Endothelial cell of umbilical vein (primary cell): ENCODE measurements at regions of chr4 and their contacts with region 1.

Region 1: GRCh38 chr4:2536193-2537010 is at the start of gene FAM193A:
- DNase-seq: peak; percentile 100
- H3K4me3 ChIP-seq: peak within 1 kb of the TSS; percentile 75 to 99 (median 88)
- H3K27ac ChIP-seq: peak within 1 kb of the TSS; percentile 81
- H3K4me1 ChIP-seq: peaks cover 9% of the 10 kb centered on the region
- H3K27me3 ChIP-seq: no peaks in the 10 kb centered on the region
- CTCF ChIP-seq: no peak
- POLR2A ChIP-seq: peak; percentile 46
- total RNA-seq, gene FAM193A: 32.0 and 32.1 TPM in 2 replicates

Region 2: DNA sequence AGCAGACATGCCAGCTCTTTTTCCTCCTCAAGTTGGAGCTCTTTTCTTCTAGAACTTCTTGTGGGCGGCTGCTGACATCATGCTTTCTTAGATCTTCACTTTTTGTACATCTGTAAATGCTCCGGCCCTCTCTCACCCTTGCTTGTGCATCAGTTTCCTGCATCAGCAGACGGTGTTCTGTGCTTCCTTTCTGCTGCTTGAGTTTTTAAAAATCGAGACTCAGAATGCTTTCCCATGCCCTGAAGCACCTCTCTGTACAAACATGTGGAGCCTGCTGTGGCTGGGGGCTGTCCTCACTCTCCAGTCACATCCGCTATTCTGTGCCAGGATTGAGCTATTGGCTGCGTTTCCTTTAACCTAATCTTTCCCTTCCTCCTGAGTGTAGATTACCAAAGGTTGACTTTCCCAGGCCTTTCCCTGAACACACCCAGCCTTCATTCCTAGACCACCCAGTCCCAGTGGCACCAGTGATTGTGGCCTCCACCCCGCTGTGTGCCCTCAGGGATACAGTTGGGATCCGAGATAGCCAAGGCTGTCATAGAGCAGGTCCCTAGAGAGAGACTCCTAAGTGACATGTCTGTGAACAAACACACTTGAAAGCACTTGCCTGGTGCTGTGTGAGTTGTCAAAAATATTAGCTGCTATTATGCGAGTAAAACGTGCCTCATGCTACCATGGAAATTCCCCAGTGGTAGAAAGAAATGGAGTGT is 177.8 kb after region 1 on chr4:
- CTCF ChIA-PET with region 1: no interaction called
- POLR2A ChIA-PET with region 1: no interaction called
- dilution Hi-C with region 1: no loop called
- intact Hi-C with region 1: loop called (anchors 10 kb)
- DNase-seq: peak; percentile 99
- H3K4me3 ChIP-seq: no peak overlapping the region
- H3K27ac ChIP-seq: peak overlapping the region; percentile 94
- H3K4me1 ChIP-seq: peaks cover 23% of the 10 kb centered on the region
- H3K27me3 ChIP-seq: no peaks in the 10 kb centered on the region
- CTCF ChIP-seq: no peak
- POLR2A ChIP-seq: no peak

Region 3: DNA sequence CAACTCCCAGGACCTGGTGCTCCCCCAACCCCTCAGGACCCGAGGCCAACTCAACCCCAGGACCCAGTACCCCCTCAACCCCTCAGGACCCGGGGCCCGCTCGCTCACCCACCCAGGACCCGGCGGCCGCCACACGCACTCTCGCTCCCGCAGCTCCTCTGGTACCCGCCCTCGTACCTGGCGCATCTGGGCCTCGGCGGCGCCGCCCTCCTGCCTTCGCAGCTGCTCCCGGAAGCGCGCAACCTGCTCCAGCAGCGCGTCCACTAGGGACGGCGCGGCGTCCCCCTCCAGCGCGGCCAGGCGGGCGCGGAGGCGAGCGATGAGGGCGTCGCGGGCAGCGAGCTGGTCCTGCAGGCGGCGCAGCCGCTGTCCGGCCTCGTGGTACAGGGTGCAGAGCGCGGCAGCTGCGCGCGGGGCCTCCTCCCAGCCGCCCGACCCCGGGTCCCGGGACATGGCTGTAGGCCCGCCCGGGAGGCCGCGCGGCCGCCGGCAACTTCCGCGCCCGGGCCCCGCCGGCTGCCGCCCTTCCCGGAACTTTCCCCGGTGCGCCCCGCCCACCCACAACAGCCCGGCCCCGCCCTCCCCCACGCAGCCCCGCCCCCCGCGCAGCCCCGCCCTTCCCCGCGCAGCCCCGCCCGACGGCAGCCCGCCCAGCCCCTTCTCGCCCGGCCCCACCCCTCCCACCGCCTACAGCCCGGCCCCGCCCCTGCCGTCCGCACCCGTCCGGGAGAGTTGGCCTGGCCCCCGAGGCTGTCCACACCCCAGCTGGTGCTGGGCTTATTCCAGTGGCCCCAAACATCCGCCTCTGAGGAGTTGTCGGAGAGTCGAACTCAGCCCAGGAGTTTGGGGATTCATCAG is 219.7 kb after region 1 on chr4 and contains the start of gene TNIP2:
- CTCF ChIA-PET with region 1: no interaction called
- POLR2A ChIA-PET with region 1: no interaction called
- dilution Hi-C with region 1: no loop called
- intact Hi-C with region 1: loop called (anchors 5 kb)
- DNase-seq: peak; percentile 75
- H3K4me3 ChIP-seq: peak within 1 kb of the TSS; percentile 63 to 78 (median 78)
- H3K27ac ChIP-seq: peak within 1 kb of the TSS; percentile 45
- H3K4me1 ChIP-seq: peaks cover 9% of the 10 kb centered on the region
- H3K27me3 ChIP-seq: no peaks in the 10 kb centered on the region
- CTCF ChIP-seq: peak; percentile 26 to 39
- POLR2A ChIP-seq: peak; percentile 87
- total RNA-seq, gene TNIP2: 49.0 and 52.1 TPM in 2 replicates

Region 4: GRCh38 chr4:2811830-2812611 is 275.6 kb after region 1 on chr4:
- CTCF ChIA-PET with region 1: no interaction called
- POLR2A ChIA-PET with region 1: no interaction called
- dilution Hi-C with region 1: no loop called
- intact Hi-C with region 1: loop called (anchors 5 kb)
- DNase-seq: peak; percentile 63
- H3K4me3 ChIP-seq: peak overlapping the region in 2 of 3 experiments; percentile 39 to 54
- H3K27ac ChIP-seq: peak overlapping the region; percentile 70
- H3K4me1 ChIP-seq: peaks cover 19% of the 10 kb centered on the region
- H3K27me3 ChIP-seq: no peaks in the 10 kb centered on the region
- CTCF ChIP-seq: no peak
- POLR2A ChIP-seq: peak; percentile 85